Activated T-helper 1 cell treated with anti-CD3 and anti-CD28 coated beads, Interleukin-12 subunit alpha, Interleukin-12 subunit beta, Interleukin-2, Interleukin-4 antibody, amounts not matched to agents 30 ng/mL and 10 ng/mL and 1 ng/mL, durations not matched to agents 14 hours and 24 hours and 36 hours (primary cell): ENCODE measurements at regions of chr3 and their contacts with region 1.

Region 1: GRCh38 chr3:186534113-186534669 is 10.0 kb downstream of the CRYGS start:
- DNase-seq: peak; percentile 59
- H3K4me3 Mint-ChIP-seq: peak overlapping the region; percentile 73
- H3K27ac Mint-ChIP-seq: peak overlapping the region; percentile 97
- H3K4me1 Mint-ChIP-seq: peaks cover 74% of the 10 kb centered on the region
- H3K27me3 Mint-ChIP-seq: no peaks in the 10 kb centered on the region

Region 2: DNA sequence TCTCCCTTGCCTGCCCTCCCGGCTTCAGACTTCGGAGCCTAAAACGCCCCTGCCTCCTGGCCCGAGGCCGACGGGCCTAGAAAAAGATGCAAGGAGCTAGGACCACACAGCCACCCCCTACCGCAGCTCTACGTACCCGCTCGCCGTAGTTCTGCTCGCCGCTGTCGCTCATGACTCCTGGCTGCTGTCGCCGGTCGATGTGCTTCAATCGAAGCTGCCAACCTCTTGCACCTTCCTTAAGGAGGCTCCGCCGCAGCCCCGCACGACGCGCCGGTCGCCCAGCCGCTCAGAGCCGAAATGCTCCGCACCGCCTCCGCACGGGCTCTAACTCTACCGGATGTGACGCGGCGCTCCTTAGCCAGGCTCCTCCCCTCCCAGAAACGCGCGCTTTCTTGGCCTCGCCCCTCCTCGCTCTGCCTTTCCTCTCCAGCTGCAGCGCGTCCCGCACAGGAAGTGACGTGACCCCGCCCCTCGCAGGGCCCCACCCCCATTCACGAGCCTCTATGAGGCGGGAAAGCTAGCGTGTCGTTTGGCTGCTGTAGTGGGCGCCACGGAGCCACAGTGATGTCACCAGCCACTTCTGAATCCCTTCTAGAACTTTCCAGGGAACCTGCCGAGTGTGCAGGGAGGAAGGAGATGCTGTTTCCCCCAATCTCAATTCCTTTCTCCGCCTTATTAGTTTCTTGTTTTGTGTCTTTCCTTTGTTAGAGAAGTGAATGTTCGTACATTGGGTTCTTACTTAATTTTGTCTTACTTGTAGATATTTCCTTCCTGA is 596.3 kb before region 1 on chr3 and contains the start of gene TRA2B:
- intact Hi-C with region 1: loop called (anchors 1 kb)
- DNase-seq: peak; percentile 98
- H3K4me3 Mint-ChIP-seq: peak within 1 kb of the TSS; percentile 97
- H3K27ac Mint-ChIP-seq: peak within 1 kb of the TSS; percentile 99
- H3K4me1 Mint-ChIP-seq: peaks cover 40% of the 10 kb centered on the region
- H3K27me3 Mint-ChIP-seq: peaks cover 8% of the 10 kb centered on the region
- total RNA-seq, gene TRA2B: 279 and 312 TPM in 2 replicates

Region 3: GRCh38 chr3:186361762-186362536 is 172.2 kb before region 1 on chr3 and contains the start of gene DGKG:
- intact Hi-C with region 1: loop called (anchors 5 kb)
- DNase-seq: no peak
- H3K4me3 Mint-ChIP-seq: peak within 1 kb of the TSS; percentile 32
- H3K27ac Mint-ChIP-seq: no peak within 1 kb of the TSS
- H3K4me1 Mint-ChIP-seq: no peaks in the 10 kb centered on the region
- H3K27me3 Mint-ChIP-seq: peaks cover 44% of the 10 kb centered on the region
- total RNA-seq, gene DGKG: 0.26 and 1.4 TPM in 2 replicates

Region 4: GRCh38 chr3:186461141-186461540 is 73.0 kb before region 1 on chr3:
- intact Hi-C with region 1: loop called (anchors 1 kb)
- DNase-seq: no peak
- H3K4me3 Mint-ChIP-seq: no peak overlapping the region
- H3K27ac Mint-ChIP-seq: no peak overlapping the region
- H3K4me1 Mint-ChIP-seq: no peaks in the 10 kb centered on the region
- H3K27me3 Mint-ChIP-seq: peaks cover 9% of the 10 kb centered on the region

Region 5: DNA sequence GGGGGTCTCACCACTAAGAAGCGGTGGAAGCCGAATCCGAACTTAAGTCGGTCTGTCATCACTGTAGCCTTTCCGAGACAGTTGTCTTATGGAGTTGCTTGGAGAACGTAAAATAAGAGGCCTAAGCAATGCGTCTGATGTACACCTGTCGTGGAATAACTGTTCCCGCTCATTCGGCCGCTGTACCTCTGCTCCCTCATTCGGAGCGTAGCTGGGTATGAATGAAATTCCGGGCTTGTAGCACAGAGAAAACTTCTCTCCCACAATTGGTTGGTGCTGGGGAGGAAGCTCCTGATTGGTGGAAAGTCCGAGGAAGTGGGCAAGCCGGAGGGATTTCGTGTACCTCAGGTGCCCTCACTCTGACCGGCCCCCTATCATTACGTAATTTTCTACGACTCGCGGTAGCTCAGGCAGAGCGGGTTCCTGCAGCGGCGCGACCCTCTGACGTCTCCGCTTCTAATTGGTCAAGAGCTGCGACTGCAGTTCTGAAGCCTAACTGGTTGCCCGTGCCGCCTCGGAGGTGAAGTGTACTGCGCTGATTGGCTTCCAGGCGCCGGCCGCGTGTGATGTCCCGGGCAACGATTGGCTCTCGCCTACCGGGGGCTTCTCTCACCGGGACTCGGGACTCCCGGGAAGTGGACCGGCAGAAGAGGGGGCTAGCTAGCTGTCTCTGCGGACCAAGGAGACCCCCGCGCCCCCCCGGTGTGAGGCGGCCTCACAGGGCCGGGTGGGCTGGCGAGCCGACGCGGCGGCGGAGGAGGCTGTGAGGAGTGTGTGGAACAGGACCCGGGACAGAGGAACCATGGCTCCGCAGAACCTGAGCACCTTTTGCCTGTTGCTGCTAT is 36.1 kb after region 1 on chr3 and contains the start of gene DNAJB11:
- intact Hi-C with region 1: loop called (anchors 1 kb)
- DNase-seq: peak; percentile 98
- H3K4me3 Mint-ChIP-seq: peak within 1 kb of the TSS; percentile 91
- H3K27ac Mint-ChIP-seq: peak within 1 kb of the TSS; percentile 99
- H3K4me1 Mint-ChIP-seq: peaks cover 59% of the 10 kb centered on the region
- H3K27me3 Mint-ChIP-seq: no peaks in the 10 kb centered on the region
- total RNA-seq, gene DNAJB11: 71.0 and 75.8 TPM in 2 replicates

Region 6: DNA sequence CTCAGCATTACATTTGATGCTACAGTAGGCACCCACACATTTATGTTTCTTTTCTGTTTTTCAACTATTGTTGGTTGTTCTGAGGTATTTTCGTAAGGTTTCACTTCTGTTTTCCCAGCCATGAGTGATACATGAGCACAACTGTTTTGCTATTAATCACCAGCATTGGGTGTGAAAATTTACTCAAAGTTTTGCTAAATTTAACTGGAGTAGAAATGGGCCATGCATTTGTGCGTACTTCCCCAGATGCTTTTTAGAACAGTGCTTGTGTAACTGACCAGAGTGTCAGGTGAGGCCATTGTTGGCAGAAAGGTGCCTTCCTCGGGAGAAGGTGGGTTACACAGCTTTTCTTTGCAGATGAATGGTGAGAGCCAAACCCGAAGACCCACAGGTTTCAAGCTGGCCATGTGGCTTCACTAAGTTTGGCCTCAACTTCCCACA is 466.5 kb after region 1 on chr3:
- intact Hi-C with region 1: loop called (anchors 10 kb)
- DNase-seq: peak; percentile 29
- H3K4me3 Mint-ChIP-seq: peak overlapping the region; percentile 30
- H3K27ac Mint-ChIP-seq: peak overlapping the region; percentile 90
- H3K4me1 Mint-ChIP-seq: peaks cover 86% of the 10 kb centered on the region
- H3K27me3 Mint-ChIP-seq: no peaks in the 10 kb centered on the region